HEK293T (cell line): ENCODE measurements at regions of chr18 and their contacts with region 1.

Region 1: DNA sequence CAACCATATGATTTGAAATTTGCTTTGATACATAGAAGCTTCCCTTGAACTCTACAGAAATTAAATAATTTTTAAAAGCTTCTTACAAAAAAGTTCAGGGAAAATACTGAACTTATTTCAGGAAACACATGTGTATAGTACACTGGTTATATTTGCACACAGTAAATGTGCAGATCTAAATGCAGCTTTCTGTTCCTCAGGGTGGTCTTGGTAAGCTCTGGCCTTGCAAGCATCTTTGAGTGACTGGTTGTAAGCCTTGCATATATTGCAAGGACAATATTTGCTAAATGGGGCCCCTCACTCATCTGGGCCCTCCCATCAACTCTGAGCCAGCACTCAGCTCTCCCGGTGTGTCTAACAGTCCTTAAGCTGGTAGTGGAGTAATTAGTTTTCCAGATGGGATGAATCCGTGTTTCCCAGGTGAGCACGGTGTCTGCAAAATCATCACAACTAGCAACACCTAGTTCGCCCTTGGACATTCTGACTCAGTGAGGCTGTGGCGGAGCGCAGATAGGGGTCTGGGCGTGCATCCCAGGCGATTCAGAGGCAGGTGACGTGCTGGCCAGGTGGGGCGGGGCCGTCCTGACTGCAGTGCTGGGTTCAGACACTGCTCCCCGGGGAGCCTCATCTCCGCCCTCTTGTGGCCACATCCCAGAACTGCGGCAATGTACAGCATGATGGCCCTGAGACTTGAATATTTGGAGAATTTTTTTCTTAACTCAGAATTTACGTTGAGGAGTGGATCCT is 149.6 kb downstream of the MBP start:
- DNase-seq: peak; percentile 82

Region 2: DNA sequence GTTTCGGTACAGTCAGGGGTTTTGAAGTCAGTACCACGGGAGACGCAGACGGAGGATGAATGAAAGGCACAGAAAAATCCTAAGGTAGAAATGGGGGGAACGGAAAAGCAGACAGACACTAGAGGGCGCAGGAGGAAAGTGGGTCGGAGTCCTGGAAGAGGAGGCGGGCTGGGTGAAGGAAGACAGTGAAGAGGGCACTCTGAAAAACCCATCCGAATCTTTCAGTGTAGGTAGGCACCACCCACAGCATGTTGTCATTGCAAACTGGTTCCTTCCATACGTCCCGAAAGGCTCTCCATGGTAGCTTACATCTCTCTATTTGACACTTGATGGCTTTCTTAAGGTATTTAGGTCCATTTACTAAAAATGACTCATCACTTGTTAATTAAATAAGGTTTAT is 179.2 kb before region 1 on chr18:
- CTCF ChIA-PET with region 1: interaction called, 10 read pairs
- POLR2A ChIA-PET with region 1: no interaction called
- DNase-seq: peak; percentile 57